A549 (cell line): ENCODE measurements at regions of chr2 and their contacts with region 1.

Region 1: DNA sequence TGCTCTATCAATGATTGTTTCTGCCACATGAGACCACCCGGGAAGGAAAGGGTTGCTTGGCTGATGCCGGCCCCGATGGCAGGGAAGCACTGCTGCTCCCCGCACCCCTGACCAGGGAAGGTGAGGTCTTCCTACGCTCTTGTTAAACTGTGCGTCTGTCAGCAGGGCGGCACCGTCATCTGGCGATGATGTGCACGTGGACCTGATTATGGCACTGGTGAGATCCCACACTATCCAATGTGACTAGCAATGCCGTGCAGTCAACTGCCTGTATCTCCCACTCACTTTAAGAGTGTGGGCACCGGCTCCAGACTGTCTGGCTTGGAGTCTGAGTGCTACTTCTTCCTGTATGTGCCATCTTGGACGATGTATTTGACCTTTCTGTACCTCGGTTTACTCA is 209.2 kb downstream of the MYT1L start:
- DNase-seq: no peak
- ATAC-seq: no peak
- H3K4me3 ChIP-seq: no peak overlapping the region
- H3K27ac ChIP-seq: no peak overlapping the region
- H3K4me1 ChIP-seq: no peaks in the 10 kb centered on the region
- CTCF ChIP-seq: no peak
- EP300 ChIP-seq: no peak
- POLR2A ChIP-seq: no peak
- RAD21 ChIP-seq: no peak

Region 2: DNA sequence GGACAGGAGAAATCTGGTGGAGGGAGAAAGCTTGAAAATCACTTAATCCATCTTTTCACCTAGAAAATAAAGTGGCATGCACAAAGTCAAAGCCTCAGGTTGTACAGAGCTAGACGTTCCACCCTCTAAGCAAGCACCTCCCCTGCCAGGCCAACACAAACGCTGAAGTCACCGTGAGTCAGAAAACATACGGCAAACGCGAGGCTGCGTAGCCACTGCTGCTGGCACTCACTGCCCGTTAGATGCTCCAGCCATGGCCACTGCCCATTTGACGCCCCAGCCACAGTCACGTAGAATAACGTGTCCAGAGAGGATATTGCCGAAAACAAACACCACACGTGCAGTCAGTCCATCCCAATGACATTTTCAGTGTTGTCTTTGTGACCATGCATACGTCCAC is 167.8 kb before region 1 on chr2:
- CTCF ChIA-PET with region 1: no interaction called
- POLR2A ChIA-PET with region 1: no interaction called
- DNase-seq: peak in 1 of 2 experiments; percentile 21
- ATAC-seq: peak in 1 of 2 experiments; percentile 48; a peak in 2 of 6 replicates
- H3K4me3 ChIP-seq: no peak overlapping the region
- H3K27ac ChIP-seq: no peak overlapping the region
- H3K4me1 ChIP-seq: no peaks in the 10 kb centered on the region
- CTCF ChIP-seq: no peak
- EP300 ChIP-seq: no peak
- POLR2A ChIP-seq: no peak
- RAD21 ChIP-seq: no peak

Region 3: GRCh38 chr2:2107141-2107540 is 14.7 kb before region 1 on chr2:
- CTCF ChIA-PET with region 1: interaction called, 47 read pairs
- POLR2A ChIA-PET with region 1: no interaction called
- DNase-seq: no peak
- ATAC-seq: no peak
- H3K4me3 ChIP-seq: no peak overlapping the region
- H3K27ac ChIP-seq: no peak overlapping the region
- H3K4me1 ChIP-seq: no peaks in the 10 kb centered on the region
- CTCF ChIP-seq: no peak
- EP300 ChIP-seq: no peak
- POLR2A ChIP-seq: no peak
- RAD21 ChIP-seq: no peak